ENCODE measurements at regions of chr11 and their contacts with region 1.

Region 1: DNA sequence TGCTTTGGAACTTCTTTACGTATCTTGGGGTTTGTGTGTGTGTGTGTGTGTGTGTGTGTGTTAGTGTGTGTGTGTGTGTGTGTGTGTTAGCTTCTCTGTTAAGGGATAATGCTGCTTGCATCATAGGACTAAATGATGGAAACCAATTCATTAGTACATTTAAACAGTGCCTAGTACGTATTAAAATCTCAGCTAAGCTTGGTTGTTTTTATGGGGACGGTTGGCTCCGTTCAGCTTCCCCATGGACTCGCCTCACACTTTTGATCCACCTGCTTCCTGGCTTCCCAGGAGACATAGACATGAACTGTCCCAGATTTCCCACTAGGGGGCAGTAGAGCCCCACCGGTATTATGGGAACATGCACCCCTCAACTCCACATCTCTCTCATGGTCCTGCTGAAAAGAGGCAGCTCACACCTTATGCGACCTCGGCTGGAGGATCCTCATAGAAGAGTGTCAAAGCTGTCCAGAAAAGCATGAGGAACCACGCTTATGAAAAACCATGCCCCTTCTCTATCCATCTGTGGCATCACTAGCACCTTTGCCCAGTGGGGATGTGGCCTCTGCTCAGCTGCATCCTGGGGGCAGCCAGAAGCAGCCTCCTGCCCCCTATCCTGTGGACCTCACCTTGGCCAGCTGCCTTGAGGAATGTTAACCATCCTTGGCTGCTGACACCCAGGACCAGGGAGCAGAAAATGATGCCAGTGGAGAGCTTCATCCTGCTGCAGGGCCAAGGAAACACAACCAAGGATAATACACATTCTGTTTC is 9.7 kb upstream of the SAAL1 start:
- DNase-seq: peak; percentile 75
- ATAC-seq: peak; percentile 96
- H3K4me3 ChIP-seq: no peak overlapping the region
- H3K27ac ChIP-seq: no peak overlapping the region
- H3K4me1 ChIP-seq: peaks cover 53% of the 10 kb centered on the region
- H3K27me3 ChIP-seq: peaks cover 0 to 4% of the 10 kb centered on the region in 2 experiments; a peak in 2 of 5 replicates
- CTCF ChIP-seq: peak; percentile 96
- EP300 ChIP-seq: no peak
- POLR2A ChIP-seq: no peak
- RAD21 ChIP-seq: peak; percentile 92

Region 2: DNA sequence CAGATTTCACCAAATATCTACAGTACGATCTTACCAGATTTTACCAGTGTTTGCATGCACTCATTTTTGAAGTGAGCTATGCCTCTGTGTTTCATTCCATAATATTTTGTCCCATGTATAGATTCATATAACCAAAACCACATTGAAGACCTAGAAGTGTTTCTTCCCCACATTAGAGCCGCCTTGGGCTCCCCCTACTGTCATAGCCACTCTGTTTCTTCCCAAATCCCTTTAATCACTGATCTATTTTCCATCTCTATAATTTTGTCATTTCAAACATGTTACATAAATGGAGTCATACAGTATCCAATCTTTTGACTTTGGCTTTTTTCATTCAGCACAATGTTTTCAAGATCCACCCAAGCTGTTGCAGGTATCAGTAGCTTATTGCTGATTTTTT is 29.5 kb after region 1 on chr11:
- CTCF ChIA-PET with region 1: interaction called, 31 read pairs
- POLR2A ChIA-PET with region 1: no interaction called
- in situ Hi-C with region 1: no loop called
- intact Hi-C with region 1: loop called (anchors 1 kb)
- DNase-seq: peak; percentile 23
- ATAC-seq: 0 out of 3 replicates have a peak, but pooled peaks have one; percentile 38
- H3K4me3 ChIP-seq: no peak overlapping the region
- H3K27ac ChIP-seq: no peak overlapping the region
- H3K4me1 ChIP-seq: no peaks in the 10 kb centered on the region
- H3K27me3 ChIP-seq: peaks cover 0 to 22% of the 10 kb centered on the region in 2 experiments; a peak in 2 of 5 replicates
- CTCF ChIP-seq: peak; percentile 64
- EP300 ChIP-seq: no peak
- POLR2A ChIP-seq: no peak
- RAD21 ChIP-seq: peak; percentile 43; the same call in 1 of the 2 replicates

Region 3: GRCh38 chr11:18203723-18204122 is 88.2 kb after region 1 on chr11:
- CTCF ChIA-PET with region 1: interaction called, 28 read pairs
- POLR2A ChIA-PET with region 1: no interaction called
- in situ Hi-C with region 1: loop called (anchors 5 kb)
- intact Hi-C with region 1: loop called (anchors 1 kb)
- DNase-seq: peak; percentile 31
- ATAC-seq: peak; percentile 96
- H3K4me3 ChIP-seq: no peak overlapping the region
- H3K27ac ChIP-seq: no peak overlapping the region
- H3K4me1 ChIP-seq: peaks cover 9% of the 10 kb centered on the region; the same call in 1 of the 2 replicates
- H3K27me3 ChIP-seq: peaks cover 0 to 4% of the 10 kb centered on the region in 2 experiments; a peak in 1 of 5 replicates
- CTCF ChIP-seq: peak; percentile 66
- EP300 ChIP-seq: no peak
- POLR2A ChIP-seq: no peak
- RAD21 ChIP-seq: peak; percentile 73

Region 4: DNA sequence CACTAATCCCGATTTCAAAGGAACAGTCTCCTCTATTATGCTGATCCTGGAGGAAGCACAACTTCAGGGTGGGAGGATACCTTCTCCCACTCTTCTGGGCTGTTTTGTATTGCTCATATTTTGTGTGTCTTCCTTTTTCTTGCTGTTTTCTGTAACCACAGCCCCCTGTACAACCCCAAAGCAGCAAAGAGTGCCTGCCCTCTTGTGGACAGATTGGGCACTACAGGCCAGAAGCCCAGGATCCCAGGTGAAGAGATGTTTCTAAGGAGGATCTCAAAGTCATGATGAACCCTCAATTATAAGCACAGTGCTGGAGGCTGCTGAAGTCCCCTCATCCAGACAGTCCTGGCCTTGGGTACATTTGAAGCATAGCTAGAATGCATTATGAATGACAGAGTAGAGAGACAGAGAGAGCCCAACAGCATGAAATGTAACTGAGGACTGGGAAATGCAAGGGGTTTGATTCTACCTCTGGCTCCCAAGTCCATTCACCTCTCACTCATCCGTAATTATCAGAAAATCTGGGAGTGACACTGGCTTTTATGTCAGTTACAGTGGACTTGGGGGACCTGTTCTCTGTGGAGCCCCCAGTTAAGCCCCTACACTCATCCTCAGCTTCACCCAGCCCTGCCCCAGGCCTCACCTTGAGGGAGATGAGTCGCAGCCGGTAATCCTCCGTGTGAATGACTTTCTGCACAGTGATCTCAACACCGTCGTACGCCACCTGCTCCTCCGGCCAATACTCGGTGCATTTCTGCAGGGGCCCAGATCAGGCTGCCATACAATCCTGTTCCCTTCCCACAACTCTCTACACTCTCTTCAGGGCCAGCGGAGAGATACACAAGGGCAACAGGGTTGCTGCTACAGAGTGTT is 616.6 kb after region 1 on chr11:
- CTCF ChIA-PET with region 1: interaction called, 3 read pairs
- POLR2A ChIA-PET with region 1: no interaction called
- in situ Hi-C with region 1: loop called (anchors 10 kb)
- intact Hi-C with region 1: no loop called
- DNase-seq: no peak
- ATAC-seq: peak; percentile 64
- H3K4me3 ChIP-seq: no peak overlapping the region
- H3K27ac ChIP-seq: no peak overlapping the region
- H3K4me1 ChIP-seq: no peaks in the 10 kb centered on the region
- H3K27me3 ChIP-seq: peaks cover 6 to 48% of the 10 kb centered on the region in 2 experiments; a peak in 3 of 5 replicates
- CTCF ChIP-seq: peak; percentile 83
- EP300 ChIP-seq: no peak
- POLR2A ChIP-seq: no peak
- RAD21 ChIP-seq: no peak